Mammary epithelial cell (primary cell): ENCODE measurements at regions of chr5 and their contacts with region 1.

Region 1: GRCh38 chr5:163244445-163244987 is 192.9 kb upstream of the CCNG1 start:
- DNase-seq: no peak
- H3K4me3 ChIP-seq: no peak overlapping the region
- H3K27ac ChIP-seq: no peak overlapping the region
- H3K4me1 ChIP-seq: no peaks in the 10 kb centered on the region
- H3K27me3 ChIP-seq: no peaks in the 10 kb centered on the region
- CTCF ChIP-seq: no peak

Region 2: GRCh38 chr5:163205645-163206044 is 38.9 kb before region 1 on chr5:
- CTCF ChIA-PET with region 1: no interaction called
- dilution Hi-C with region 1: no loop called
- in situ Hi-C with region 1: no loop called
- intact Hi-C with region 1: no loop called
- DNase-seq: no peak
- H3K4me3 ChIP-seq: no peak overlapping the region
- H3K27ac ChIP-seq: no peak overlapping the region
- H3K4me1 ChIP-seq: no peaks in the 10 kb centered on the region
- H3K27me3 ChIP-seq: no peaks in the 10 kb centered on the region
- CTCF ChIP-seq: no peak

Region 3: DNA sequence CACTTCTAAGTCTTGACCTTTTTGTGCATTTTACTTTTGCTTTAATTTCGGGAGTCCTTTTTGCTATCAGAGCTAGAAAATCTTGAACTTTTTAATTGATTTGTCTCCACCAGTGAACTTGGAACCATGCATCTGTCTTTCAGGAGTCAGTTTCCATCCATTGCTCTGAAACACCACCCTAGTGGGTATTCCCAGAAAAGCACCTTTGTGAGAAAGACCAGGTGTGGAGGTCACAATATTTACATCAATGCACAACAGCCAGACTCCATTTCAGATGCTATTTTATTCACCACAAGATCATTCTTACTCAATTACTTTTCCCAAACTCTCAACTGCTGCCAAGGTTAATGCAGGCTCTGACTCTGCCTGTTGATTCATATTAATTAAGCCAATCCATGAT is 38.8 kb after region 1 on chr5:
- CTCF ChIA-PET with region 1: no interaction called
- dilution Hi-C with region 1: loop called (anchors 5 kb)
- in situ Hi-C with region 1: no loop called
- intact Hi-C with region 1: no loop called
- DNase-seq: no peak
- H3K4me3 ChIP-seq: no peak overlapping the region
- H3K27ac ChIP-seq: no peak overlapping the region
- H3K4me1 ChIP-seq: no peaks in the 10 kb centered on the region
- H3K27me3 ChIP-seq: no peaks in the 10 kb centered on the region
- CTCF ChIP-seq: no peak